Right ventricle myocardium superior (tissue), 1 donor: ENCODE measurements at regions of chr13 and their contacts with region 1.

Region 1: DNA sequence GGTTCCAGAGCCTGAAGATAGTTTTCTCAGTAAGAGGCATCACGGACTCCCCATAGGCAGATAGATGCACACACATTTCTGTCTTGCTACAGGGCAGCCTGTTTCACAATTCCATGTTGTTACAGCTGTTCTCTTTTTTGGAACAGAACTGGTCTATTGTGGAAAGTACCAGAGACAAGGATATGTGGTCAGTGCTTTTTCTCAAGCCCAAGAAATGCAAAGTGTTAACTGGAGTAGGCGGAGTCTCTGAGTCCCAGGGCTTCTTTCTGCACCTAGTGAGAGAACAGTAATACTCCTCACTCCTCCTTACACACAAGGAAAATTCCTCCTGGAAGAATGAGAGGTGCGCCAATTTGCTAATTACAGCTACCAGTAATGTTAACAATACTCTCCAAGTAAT is 141.6 kb upstream of the ARGLU1 start:
- DNase-seq: no peak
- ATAC-seq: peak; percentile 90

Region 2: DNA sequence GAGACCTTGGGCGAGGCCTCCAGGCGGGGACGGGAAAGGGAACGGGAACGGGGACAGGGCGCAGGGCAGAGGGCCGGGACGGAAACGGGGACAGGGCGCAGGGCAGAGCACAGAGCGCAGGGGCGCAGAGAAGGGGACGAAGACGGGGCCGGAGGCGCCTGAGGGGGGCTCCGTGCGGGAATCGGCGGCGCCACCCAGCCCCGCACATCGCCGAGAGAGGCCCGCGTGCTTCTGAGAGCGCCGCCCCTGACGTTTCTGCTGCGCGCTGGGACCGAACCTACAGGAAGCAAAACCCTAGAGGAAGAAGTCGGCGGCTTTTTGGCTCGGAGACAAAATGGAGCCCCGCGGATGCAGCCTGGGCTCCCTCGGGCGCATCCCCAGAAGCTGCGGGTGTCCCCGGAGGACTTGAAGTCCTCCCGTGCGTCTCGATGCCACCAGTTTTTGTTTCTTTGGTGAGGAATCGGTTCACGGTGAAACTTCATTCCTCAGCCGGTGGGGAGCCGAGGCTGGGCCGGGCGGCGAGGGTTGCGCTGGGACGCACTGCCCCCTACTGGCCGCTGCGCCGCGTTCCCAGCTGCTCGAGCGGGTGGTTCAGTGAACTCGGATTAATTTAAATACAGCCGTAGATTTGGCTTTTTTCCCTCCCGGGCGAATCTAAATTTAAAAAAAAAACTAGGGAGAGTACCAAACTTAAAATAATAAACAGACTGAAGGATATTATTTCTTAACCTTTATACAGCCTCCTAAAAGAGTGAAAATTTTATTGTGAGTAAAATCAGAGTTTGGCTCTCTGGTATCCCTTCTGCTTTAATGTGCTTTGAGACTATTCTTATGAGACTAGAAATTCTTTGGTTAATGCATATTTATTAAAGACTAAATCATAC is 208.4 kb after region 1 on chr13:
- intact Hi-C with region 1: loop called (anchors 10 kb)
- DNase-seq: peak; percentile 85
- ATAC-seq: peak; percentile 96